PC-9 (cell line): ENCODE measurements at regions of chr5 and their contacts with region 1.

Region 1: GRCh38 chr5:173283318-173284288 is 44.6 kb downstream of the STC2 start:
- DNase-seq: peak; percentile 49 to 85
- H3K4me3 ChIP-seq: peak overlapping the region; percentile 40; the same call in 1 of the 2 replicates
- H3K27ac ChIP-seq: no peak overlapping the region
- H3K4me1 ChIP-seq: 0 out of 2 replicates have a peak, but pooled peaks cover 5% of the 10 kb centered on the region
- H3K27me3 ChIP-seq: 0 out of 2 replicates have a peak, but pooled peaks cover 9% of the 10 kb centered on the region
- CTCF ChIP-seq: peak; percentile 69

Region 2: DNA sequence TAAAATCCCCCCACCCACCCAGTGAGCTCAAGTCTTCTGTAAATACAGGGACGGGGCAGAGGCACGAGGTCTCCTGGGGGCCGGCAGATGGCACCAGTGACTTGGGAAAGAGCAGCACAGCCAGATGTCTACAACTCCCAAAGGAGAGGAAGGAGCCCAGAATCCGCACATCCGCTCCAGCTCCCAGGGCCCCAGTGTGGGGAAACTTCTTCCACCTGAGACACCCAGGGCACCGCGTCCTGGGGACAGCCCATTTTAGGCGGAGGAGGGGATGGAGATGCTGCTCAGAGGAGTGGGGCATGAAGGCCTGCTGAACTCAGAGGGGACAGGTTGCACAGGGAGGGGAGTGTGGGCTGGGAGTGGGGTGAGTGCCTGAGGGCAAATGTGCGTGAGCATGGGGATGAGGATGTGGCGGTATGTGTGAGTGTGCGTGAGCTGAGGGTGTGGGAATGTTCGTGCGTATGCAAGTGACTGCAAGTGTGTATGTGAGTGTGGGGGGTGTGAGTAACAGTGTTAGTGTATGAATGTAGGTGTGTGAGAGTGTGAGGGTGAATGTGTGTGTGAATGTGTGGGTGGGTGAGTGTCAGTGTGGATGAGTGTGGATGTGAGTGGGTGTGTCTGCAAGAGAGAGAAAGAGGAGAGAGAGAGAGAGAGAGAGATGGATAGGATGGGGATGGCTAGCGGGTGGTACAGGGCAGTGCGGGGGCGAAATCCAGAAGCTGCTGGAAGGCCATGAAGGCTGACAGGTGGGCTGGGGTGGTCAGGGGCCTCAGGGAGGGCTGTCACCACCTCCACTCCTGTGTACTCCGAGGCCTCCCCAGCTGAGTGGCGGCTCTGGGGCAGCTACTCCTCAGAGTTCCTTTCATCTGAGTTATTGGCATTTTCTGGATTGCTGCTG is 576.1 kb before region 1 on chr5:
- CTCF ChIA-PET with region 1: interaction called, 11 read pairs
- POLR2A ChIA-PET with region 1: no interaction called
- intact Hi-C with region 1: loop called (anchors 2 kb)
- DNase-seq: peak in 1 of 2 experiments; percentile 69
- H3K4me3 ChIP-seq: no peak overlapping the region
- H3K27ac ChIP-seq: no peak overlapping the region
- H3K4me1 ChIP-seq: no peaks in the 10 kb centered on the region; the same call in 1 of the 2 replicates
- H3K27me3 ChIP-seq: no peaks in the 10 kb centered on the region
- CTCF ChIP-seq: peak; percentile 74

Region 3: DNA sequence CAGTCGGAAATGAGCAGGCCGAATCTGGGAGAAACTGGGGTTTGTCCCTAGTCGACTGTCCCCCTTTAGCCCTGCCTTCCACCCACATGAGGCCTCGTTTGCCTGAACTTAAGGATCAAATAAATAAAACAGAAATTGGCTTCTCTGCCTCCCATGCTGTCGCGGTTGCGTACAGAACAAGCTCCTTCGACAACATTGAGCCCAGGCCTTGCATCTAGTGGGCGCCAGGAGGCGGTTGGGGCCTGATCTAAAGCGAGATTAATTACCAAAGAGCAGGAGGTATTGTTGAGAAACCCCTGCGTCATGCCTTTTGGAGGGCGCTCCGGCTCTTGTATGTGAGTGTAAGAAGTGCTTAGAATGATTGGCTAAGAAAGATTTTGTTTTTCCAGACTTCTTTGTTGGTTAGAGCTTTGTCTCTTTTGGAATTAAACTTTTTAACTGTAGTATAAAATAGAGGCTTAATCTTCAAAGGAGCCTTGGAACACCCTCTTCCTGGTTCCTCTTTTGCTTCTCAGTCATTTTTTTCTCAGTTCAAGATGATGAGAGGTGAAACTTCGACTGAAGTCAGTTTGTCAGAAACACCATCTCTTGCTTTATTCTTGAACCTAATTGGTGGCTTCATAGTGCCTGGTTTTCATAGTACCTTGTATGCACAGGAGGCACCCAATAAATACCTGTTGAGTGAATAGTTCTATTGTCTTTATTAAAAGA is 299.2 kb before region 1 on chr5:
- CTCF ChIA-PET with region 1: no interaction called
- POLR2A ChIA-PET with region 1: no interaction called
- intact Hi-C with region 1: loop called (anchors 1 kb)
- DNase-seq: peak; percentile 63 to 79
- H3K4me3 ChIP-seq: peak overlapping the region; percentile 87
- H3K27ac ChIP-seq: peak overlapping the region; percentile 77
- H3K4me1 ChIP-seq: peaks cover 13% of the 10 kb centered on the region; the same call in 1 of the 2 replicates
- H3K27me3 ChIP-seq: no peaks in the 10 kb centered on the region
- CTCF ChIP-seq: peak; percentile 65

Region 4: GRCh38 chr5:173075139-173075982 is 208.2 kb before region 1 on chr5:
- CTCF ChIA-PET with region 1: no interaction called
- POLR2A ChIA-PET with region 1: no interaction called
- intact Hi-C with region 1: no loop called
- DNase-seq: peak; percentile 37 to 78
- H3K4me3 ChIP-seq: peak overlapping the region; percentile 31
- H3K27ac ChIP-seq: peak overlapping the region; percentile 90
- H3K4me1 ChIP-seq: peaks cover 39% of the 10 kb centered on the region
- H3K27me3 ChIP-seq: no peaks in the 10 kb centered on the region
- CTCF ChIP-seq: no peak

Region 5: DNA sequence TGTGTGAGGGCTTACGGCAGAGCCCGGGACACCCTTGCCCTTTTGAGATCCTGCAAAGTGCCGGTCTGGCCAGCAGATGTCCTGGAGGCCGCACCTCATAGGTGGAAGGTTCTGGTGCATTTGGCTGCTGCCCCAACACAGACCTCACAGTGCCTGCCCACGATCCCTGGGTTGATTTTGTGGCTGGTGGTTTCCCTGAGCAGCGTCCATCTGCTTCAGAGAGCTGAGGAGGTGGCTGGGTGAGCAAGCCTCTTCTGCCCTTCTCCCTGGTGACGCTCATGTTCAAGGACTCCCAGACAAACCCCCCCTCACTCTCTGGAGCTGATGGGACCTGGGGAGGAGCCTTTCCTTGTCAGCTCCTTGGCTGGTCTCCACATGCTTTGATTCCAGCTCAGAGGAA is 120.4 kb before region 1 on chr5:
- CTCF ChIA-PET with region 1: no interaction called
- POLR2A ChIA-PET with region 1: no interaction called
- intact Hi-C with region 1: loop called (anchors 2 kb)
- DNase-seq: no peak
- H3K4me3 ChIP-seq: no peak overlapping the region
- H3K27ac ChIP-seq: no peak overlapping the region
- H3K4me1 ChIP-seq: no peaks in the 10 kb centered on the region
- H3K27me3 ChIP-seq: no peaks in the 10 kb centered on the region
- CTCF ChIP-seq: no peak

Region 6: DNA sequence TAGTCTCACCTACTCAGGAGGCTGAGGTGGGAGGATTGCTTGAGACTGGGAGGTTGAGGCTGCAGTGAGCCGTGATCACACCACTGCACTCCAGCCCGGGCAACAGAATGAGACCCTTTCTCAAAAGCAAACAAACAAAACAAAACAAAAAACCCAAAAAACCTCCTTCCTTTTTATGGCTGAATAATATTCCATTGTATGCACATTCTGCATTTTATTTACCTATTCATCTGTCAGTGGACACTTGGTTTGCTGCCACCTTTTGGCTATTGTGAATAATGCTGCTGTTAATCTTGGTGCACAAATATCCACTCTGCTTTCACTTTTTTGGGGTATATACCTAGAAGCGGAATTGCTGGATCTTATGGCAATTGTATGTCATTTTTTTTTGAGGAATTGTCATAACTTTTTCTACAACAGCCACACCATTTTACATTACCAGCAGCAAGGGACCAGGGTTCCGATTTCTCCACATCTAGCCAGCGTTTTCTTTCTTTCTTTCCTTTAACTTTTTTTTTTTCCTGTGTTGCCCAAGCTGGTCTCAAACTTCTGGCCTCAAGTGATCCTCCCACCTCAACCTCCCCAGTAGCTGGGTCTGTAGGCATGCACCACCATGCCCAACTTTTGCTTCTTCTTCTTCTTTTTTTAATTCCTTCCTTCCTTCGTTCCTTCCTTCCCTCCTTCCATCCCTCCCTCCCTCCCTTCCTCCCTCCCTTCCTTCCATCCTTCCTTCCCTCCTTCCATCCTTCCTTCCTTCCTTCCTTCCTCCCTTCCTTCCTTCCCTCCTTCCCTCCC is 79.2 kb before region 1 on chr5:
- CTCF ChIA-PET with region 1: interaction called, 13 read pairs
- POLR2A ChIA-PET with region 1: no interaction called
- intact Hi-C with region 1: loop called (anchors 10 kb)
- DNase-seq: peak in 1 of 2 experiments; percentile 14
- H3K4me3 ChIP-seq: no peak overlapping the region
- H3K27ac ChIP-seq: no peak overlapping the region
- H3K4me1 ChIP-seq: peaks cover 18% of the 10 kb centered on the region
- H3K27me3 ChIP-seq: peaks cover 28% of the 10 kb centered on the region; the same call in 1 of the 2 replicates
- CTCF ChIP-seq: peak; percentile 75

Region 7: DNA sequence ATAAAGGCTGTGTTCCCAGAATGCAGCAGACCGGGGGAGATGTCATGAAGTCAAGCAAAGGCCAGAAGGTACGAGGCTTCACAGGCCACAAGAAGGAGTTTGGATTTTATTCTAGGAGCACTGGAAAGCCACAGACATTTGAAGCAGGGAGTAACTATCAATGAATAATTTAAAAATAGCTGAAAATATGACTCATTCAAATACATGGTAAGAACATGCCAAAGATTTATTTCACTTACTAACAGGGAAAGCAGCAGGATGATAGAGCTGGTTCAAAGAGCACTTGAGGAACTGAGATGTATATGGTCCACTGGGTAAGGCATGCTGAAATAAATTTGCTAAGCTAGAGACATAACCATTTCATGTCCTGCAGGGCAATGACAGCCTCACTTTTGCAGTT is 1494.0 kb after region 1 on chr5:
- CTCF ChIA-PET with region 1: no interaction called
- POLR2A ChIA-PET with region 1: no interaction called
- intact Hi-C with region 1: no loop called
- DNase-seq: no peak
- H3K4me3 ChIP-seq: no peak overlapping the region
- H3K27ac ChIP-seq: no peak overlapping the region
- H3K4me1 ChIP-seq: no peaks in the 10 kb centered on the region
- H3K27me3 ChIP-seq: peaks cover 30% of the 10 kb centered on the region; the same call in 1 of the 2 replicates
- CTCF ChIP-seq: no peak